MCF 10A (cell line): ENCODE measurements at regions of chr16 and their contacts with region 1.

Region 1: DNA sequence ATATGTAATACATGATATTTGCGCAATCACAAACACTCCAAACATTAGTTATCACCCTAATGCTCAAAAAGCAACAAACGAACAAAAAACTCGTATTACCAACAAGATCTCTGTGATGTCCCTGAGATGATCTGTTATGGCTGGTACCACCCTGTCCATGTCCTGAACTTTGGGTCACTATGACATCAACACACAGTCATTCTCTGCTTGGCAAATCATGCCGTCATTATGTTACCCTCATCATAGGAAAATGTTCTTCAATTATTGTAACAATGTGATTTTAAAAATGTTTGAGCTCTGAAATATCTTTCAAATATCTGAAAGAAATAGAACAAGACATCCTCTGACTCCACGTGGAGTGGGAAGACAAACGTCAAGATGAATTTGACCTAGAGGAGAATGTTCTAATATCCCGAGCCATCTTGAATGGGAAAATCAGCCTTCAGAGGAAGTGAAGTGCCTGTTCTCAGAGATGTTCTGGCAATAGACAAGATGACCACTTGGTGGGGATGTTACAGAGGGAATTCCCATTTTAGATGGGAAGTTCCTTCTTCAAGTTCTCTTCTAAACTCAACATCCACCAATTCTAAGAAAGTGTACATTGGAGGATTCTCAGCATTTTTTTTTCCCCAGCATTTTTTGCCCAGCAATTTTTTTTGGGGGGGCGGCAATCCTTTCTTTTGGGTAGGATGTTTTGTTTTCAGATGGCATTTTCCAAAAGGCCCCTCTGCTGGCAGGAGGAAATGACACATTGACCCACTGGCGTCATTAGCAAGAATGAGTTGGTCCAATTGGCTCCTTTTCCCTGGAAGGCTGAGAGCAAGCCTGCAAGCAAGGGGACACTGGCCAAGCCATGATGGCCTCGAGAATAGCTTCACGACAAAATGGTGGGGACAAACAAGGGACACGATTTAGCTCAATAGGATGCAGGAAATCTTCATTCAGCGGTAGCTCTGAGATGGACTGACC is 3.7 kb upstream of the HSD17B2 start:
- DNase-seq: peak; percentile 81
- H3K4me3 Mint-ChIP-seq: no peak overlapping the region
- H3K27ac Mint-ChIP-seq: no peak overlapping the region
- H3K4me1 Mint-ChIP-seq: peaks cover 20% of the 10 kb centered on the region
- H3K27me3 Mint-ChIP-seq: no peaks in the 10 kb centered on the region
- CTCF ChIP-seq: peak; percentile 61

Region 2: GRCh38 chr16:81928975-81929374 is 102.4 kb before region 1 on chr16:
- CTCF ChIA-PET with region 1: no interaction called
- POLR2A ChIA-PET with region 1: no interaction called
- intact Hi-C with region 1: no loop called
- DNase-seq: peak; percentile 72
- H3K4me3 Mint-ChIP-seq: no peak overlapping the region
- H3K27ac Mint-ChIP-seq: no peak overlapping the region
- H3K4me1 Mint-ChIP-seq: no peaks in the 10 kb centered on the region
- H3K27me3 Mint-ChIP-seq: no peaks in the 10 kb centered on the region
- CTCF ChIP-seq: no peak

Region 3: DNA sequence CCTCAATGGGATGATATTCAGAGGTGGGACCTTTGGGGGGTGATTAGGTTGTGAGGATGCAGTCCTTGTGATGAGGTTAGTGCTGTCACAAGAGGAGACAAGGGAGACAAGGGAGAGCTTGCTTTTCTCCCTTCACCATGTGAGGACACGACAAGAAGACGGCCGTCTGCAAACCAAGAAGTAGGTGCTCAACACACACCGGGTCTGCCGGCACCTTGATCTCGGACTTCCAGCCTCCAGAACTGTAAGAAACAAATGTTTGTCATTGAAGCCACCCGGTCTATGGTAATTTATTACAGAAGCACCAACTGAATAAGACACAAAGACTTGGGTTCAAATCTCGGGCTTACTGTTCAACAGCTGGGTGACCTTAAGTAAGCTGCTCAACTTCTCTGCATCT is 73.7 kb after region 1 on chr16:
- CTCF ChIA-PET with region 1: no interaction called
- POLR2A ChIA-PET with region 1: no interaction called
- intact Hi-C with region 1: no loop called
- DNase-seq: no peak
- H3K4me3 Mint-ChIP-seq: no peak overlapping the region
- H3K27ac Mint-ChIP-seq: no peak overlapping the region
- H3K4me1 Mint-ChIP-seq: no peaks in the 10 kb centered on the region
- H3K27me3 Mint-ChIP-seq: no peaks in the 10 kb centered on the region
- CTCF ChIP-seq: no peak

Region 4: DNA sequence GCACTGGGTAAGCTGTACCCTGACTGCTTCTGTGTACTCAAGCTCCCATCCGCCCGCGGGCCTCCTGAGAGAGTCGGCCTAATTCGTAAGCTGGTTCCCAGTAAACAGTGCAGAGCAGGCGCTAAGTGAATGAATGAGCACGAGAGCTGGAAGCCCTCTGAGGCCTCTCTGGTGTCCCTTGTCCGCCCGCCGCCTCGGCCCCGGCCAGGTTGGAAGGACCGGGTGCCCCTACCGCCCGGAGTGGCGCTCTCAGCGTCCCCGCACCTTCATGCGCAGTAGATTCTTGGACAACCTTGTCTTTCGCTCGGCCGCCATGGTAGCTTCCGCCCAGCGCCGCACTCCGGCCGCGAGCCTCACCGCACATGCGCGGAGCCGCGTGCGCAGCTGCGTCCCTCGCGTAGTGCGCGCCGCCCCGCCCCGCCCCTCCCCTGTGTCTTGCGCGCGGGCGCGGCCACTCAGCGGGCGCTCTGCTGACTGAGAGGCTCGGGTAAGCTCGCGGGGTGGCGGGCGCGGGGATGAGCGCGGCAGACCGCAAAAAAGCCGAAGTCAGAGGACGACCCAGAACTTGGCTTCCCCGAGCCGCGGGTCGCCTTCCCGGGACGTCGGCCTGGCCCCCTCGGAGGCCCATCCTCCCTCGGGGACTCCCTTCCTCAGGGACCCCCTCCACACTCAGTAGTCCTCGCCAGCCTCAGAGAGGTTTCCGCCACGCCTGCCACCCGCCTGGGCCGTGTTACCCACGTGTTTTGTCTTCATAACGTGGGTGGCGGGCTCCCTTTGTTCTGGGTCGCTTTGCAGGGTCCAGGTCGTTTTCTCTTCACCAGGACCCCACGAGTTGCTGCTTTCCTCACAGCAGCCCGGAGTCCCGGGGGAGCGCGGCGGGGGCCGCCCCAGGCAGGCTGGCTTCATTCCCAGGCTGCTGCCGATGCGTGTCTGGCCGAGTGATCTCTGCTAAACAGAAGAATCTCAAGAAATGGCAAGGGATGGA is 138.8 kb after region 1 on chr16 and contains the start of gene MPHOSPH6:
- CTCF ChIA-PET with region 1: interaction called, 6 read pairs
- POLR2A ChIA-PET with region 1: interaction called, 3 read pairs
- intact Hi-C with region 1: loop called (anchors 1 kb)
- DNase-seq: peak; percentile 90
- H3K4me3 Mint-ChIP-seq: peak within 1 kb of the TSS; percentile 79
- H3K27ac Mint-ChIP-seq: peak within 1 kb of the TSS; percentile 68
- H3K4me1 Mint-ChIP-seq: peaks cover 16% of the 10 kb centered on the region
- H3K27me3 Mint-ChIP-seq: peaks cover 26% of the 10 kb centered on the region
- CTCF ChIP-seq: no peak
- total RNA-seq, gene MPHOSPH6: 39.9 and 46.8 TPM in 2 replicates

Region 5: DNA sequence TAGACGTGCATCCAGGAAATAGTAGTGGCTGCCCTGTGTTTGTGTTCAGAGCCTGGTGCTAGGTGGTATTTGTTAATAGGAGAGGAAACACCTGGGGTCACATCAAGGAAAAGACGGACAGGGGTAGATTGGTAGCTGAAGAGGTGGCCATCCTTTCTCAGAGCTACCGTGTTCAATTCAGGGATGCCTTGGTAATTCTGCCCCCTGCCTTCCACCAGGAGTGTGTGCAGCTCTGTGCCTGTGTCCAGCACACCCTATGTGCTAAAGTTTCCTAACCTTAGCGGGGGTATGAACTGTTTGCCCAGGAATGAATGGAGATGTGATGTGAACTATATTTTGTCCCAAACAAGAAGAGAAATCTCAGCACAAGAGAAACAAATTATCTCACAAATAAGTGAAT is 312.8 kb after region 1 on chr16:
- CTCF ChIA-PET with region 1: no interaction called
- POLR2A ChIA-PET with region 1: no interaction called
- intact Hi-C with region 1: loop called (anchors 1 kb)
- DNase-seq: peak; percentile 39
- H3K4me3 Mint-ChIP-seq: no peak overlapping the region
- H3K27ac Mint-ChIP-seq: no peak overlapping the region
- H3K4me1 Mint-ChIP-seq: no peaks in the 10 kb centered on the region
- H3K27me3 Mint-ChIP-seq: peaks cover 80% of the 10 kb centered on the region
- CTCF ChIP-seq: peak; percentile 23